Gastrocnemius medialis (tissue), 4 donors: ENCODE measurements at regions of chr2 and their contacts with region 1.

Region 1: DNA sequence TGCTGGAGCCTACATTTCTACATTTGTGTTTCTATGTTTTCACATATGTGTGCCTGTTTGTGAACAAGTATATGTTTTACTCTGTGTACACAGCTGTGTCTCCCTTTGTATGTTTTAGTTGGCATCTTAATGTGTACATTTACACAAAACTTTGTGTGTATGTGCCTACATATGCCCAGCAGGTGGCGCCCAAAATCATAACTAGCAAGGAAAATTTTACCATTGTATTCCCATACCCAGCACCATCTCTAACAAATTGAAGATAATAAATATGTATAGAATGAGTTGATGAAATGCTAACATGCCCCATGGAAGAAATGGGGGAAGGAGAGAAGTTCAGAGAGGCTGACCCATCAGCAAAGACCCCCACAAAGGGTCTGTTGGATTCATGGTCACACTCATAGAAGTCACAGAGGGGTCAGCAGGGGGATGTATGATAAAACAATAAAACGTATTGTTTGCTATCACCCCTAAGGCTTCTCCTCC is 48.1 kb downstream of the PKDCC start:
- DNase-seq: peak in 1 of 2 donors; percentile 45
- ATAC-seq: peak; percentile 61 to 66
- H3K4me3 ChIP-seq: no peak overlapping the region
- H3K27ac ChIP-seq: no peak overlapping the region
- H3K4me1 ChIP-seq: no peaks in the 10 kb centered on the region
- H3K27me3 ChIP-seq: no peaks in the 10 kb centered on the region
- CTCF ChIP-seq: peak; percentile 80 to 85 (median 81)
- POLR2A ChIP-seq: no peak

Region 2: DNA sequence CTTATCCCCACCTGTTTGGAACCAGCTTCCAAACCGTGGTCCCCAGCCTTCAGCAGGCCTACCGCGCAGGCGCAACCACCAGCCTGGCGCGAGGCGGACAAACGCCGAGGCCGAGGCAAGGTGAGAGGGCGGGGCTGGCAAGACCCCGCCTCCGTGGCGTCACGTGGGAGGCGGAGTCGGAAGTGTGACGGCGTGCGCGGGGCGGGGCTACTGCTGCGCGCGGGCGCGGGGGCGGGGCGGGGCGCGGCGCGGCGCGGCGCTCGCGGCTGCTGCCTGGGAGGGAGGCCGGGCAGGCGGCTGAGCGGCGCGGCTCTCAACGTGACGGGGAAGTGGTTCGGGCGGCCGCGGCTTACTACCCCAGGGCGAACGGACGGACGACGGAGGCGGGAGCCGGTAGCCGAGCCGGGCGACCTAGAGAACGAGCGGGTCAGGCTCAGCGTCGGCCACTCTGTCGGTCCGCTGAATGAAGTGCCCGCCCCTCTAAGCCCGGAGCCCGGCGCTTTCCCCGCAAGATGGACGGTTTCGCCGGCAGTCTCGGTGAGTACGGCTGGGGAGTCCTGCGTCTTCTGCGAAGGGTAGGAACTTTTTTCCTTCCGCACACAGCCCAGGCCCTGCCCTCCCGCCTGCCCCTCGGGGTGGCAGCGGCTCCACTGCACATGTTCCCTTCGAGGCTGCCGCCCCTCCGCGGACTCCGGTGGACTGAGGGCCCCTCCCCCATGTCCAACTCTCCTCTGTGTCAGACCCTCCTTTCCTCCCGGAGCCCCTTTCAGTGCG is 73.3 kb after region 1 on chr2 and contains the start of gene EML4:
- in situ Hi-C with region 1: no loop called
- intact Hi-C with region 1: no loop called
- DNase-seq: peak; percentile 79 to 90
- ATAC-seq: peak; percentile 96
- H3K4me3 ChIP-seq: peak within 1 kb of the TSS; percentile 73 to 92 (median 88)
- H3K27ac ChIP-seq: peak within 1 kb of the TSS; percentile 77 to 83 (median 82)
- H3K4me1 ChIP-seq: peaks cover 12 to 20% of the 10 kb centered on the region in 2 donors
- H3K27me3 ChIP-seq: no peaks in the 10 kb centered on the region
- CTCF ChIP-seq: no peak
- POLR2A ChIP-seq: peak; percentile 58 to 74
- total RNA-seq, gene EML4: 3.0 to 5.0 (median 4.6) TPM

Region 3: GRCh38 chr2:42183775-42184174 is 87.8 kb after region 1 on chr2:
- in situ Hi-C with region 1: loop called in 1 of 4 experiments (anchors 10 kb)
- intact Hi-C with region 1: no loop called
- DNase-seq: no peak
- ATAC-seq: no peak
- H3K4me3 ChIP-seq: no peak overlapping the region
- H3K27ac ChIP-seq: no peak overlapping the region
- H3K4me1 ChIP-seq: no peaks in the 10 kb centered on the region
- H3K27me3 ChIP-seq: no peaks in the 10 kb centered on the region
- CTCF ChIP-seq: no peak
- POLR2A ChIP-seq: no peak

Region 4: DNA sequence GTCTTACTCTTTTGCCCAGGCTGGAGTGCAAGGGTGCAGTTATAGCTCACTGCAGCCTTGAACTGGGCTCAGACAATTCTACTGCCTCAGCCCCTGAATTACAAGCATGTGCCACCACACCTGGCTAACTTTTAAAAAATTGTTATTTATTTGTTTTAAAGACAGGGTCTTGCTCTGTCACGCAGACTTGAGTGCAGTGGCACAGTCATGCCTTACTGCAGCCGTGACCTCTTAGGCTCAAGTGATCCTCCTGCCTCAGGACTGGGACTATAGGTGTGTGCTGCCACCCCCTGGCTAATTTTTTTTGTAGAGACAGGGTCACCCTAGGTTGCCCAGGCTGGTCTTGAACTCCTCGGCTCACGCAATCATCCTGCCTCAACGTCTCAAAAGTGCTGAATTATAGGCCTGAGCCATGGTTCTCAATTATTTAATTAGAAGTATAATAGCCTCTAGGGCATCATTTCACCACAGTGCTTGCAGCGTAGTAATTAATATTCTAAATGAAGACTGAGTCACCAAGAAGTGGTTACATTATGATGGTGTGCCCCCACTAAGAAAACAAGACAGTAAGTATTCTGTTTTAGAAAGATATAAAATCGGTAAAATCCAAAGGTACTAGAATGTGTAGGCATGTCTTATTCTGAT is 142.8 kb after region 1 on chr2:
- in situ Hi-C with region 1: loop called (anchors 5 to 10 kb)
- intact Hi-C with region 1: loop called (anchors 1 kb)
- DNase-seq: peak in 1 of 2 donors; percentile 15
- ATAC-seq: peak in 1 of 2 donors; percentile 73
- H3K4me3 ChIP-seq: no peak overlapping the region
- H3K27ac ChIP-seq: no peak overlapping the region
- H3K4me1 ChIP-seq: no peaks in the 10 kb centered on the region
- H3K27me3 ChIP-seq: no peaks in the 10 kb centered on the region
- CTCF ChIP-seq: peak in 4 of 5 experiments; percentile 13 to 51 (median 39)
- POLR2A ChIP-seq: no peak

Region 5: GRCh38 chr2:42249887-42250286 is 153.9 kb after region 1 on chr2:
- in situ Hi-C with region 1: loop called in 1 of 4 experiments (anchors 10 kb)
- intact Hi-C with region 1: no loop called
- DNase-seq: no peak
- ATAC-seq: peak; percentile 24 to 82
- H3K4me3 ChIP-seq: no peak overlapping the region
- H3K27ac ChIP-seq: no peak overlapping the region
- H3K4me1 ChIP-seq: peaks cover 7 to 17% of the 10 kb centered on the region in 2 donors
- H3K27me3 ChIP-seq: no peaks in the 10 kb centered on the region
- CTCF ChIP-seq: no peak
- POLR2A ChIP-seq: no peak

Region 6: DNA sequence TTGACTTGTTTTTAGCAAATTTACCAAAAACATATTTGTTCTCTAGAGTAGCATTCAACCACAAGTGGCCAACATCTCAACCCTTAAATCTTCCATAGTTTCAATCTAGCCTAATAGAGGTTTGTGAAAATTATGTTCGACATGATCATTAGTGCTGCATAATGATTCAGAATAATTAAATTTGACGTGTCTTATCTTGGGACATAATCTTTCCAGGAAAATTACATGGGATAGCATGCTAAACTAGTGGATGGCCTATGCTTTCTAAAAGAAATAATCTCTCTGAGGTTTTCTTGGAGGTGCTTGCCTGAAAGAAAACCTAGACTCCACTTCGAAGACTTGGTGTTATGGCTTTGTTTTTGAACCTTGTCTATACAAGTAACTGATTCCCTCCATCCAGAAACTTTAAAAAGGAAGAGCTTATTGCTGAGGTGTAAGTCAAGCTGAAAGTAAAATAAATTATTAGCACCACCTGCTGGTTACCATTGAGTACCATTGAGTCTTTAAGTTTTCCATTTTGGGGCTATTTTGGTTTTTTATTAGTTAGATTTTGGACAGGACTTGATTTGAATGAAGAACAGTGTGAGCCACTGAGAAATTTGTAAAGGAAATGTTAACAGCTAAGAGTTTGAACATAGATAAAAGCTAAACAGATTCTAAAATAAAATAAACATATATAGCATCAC is 232.3 kb after region 1 on chr2:
- in situ Hi-C with region 1: no loop called
- intact Hi-C with region 1: loop called (anchors 5 kb)
- DNase-seq: no peak
- ATAC-seq: no peak
- H3K4me3 ChIP-seq: no peak overlapping the region
- H3K27ac ChIP-seq: no peak overlapping the region
- H3K4me1 ChIP-seq: no peaks in the 10 kb centered on the region
- H3K27me3 ChIP-seq: no peaks in the 10 kb centered on the region
- CTCF ChIP-seq: peak in 3 of 5 experiments; percentile 12 to 33 (median 17)
- POLR2A ChIP-seq: no peak

Region 7: DNA sequence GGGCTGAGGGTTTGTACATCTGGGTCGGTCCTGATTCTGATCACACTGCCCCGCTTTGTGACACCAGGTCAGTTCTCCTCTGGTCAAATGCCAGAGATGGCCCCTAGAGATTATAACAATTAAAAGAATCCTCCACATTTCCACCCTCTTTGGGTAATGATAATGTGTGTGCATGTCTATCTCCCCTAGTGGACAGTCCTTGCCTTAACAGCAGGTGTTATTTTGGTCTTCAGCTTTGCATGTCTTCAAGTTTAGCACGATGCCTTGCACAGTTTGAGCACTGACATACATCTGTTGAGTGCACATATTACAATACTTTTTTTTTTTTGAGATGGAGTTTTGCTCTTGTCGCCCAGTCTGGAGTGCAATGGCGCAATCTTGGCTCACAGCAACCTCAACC is 290.7 kb after region 1 on chr2:
- in situ Hi-C with region 1: no loop called
- intact Hi-C with region 1: no loop called
- DNase-seq: no peak
- ATAC-seq: no peak
- H3K4me3 ChIP-seq: no peak overlapping the region
- H3K27ac ChIP-seq: no peak overlapping the region
- H3K4me1 ChIP-seq: no peaks in the 10 kb centered on the region
- H3K27me3 ChIP-seq: no peaks in the 10 kb centered on the region
- CTCF ChIP-seq: no peak
- POLR2A ChIP-seq: no peak